Left colon (tissue), 2 donors: ENCODE measurements at regions of chr9 and their contacts with region 1.

Region 1: DNA sequence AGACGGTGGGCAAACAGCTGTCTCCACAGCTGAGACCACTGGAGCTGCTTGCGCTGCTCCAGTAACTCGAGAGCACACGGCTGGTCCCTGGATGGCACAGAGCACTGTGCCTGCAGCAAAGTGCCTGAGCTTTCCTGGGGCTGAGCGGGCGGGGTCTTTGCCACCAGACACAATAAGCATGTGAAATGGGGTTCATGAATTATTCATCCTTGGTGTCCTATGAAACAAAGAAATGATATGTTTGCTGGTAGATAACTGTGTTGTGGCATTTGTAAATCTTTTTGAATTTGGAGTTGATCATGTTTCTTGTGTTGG is 151.7 kb upstream of the MPDZ start:
- DNase-seq: no peak
- ATAC-seq: no peak

Region 2: DNA sequence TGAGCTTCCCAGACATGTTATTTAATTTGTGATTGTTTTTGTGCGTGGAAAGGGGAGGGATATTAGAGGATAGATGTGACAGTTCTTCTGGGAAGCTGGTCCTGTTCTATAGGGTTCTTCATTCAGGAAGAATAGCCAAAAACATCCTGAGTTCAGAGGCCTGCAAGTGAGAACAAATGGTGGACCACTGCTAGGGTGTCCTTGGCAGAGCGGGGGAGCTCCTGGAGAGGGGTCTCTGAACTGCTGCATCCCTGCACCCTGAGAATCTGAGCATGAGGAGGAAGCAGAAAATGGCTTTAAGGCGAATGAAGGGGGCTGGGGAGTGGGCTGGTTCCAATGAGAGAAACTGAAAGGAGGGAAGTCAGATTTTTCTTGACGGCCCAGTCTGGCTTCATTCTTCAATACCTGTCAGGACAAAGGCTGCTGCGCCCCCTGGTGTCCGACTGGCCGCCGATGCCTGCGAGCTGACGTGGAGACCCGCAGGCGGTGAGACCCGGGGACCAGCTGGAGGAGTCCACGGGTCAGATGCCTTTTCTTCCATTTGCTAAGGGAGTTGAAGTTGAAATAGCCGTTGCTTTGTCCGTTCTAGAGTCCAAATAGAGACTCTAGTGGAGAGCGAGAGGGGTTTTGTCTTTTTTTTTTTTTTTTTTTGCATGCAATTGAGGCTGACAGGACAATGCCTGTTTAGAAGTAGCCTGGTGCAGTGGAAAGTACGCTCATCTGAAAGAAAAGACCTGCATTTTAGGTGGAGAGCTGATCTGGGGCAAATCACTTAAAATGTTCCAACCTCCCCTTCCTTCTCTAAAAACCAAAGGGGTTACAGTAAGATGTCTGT is 922.3 kb after region 1 on chr9:
- intact Hi-C with region 1: loop called in 1 of 2 experiments (anchors 5 kb)
- DNase-seq: peak; percentile 77 to 94
- ATAC-seq: peak; percentile 86